ENCODE measurements at regions of chr6 and their contacts with region 1.

Region 1: GRCh38 chr6:39102071-39102820 is 12.7 kb downstream of the SAYSD1 start:
- DNase-seq: peak; percentile 49
- H3K4me3 ChIP-seq: no peak overlapping the region
- H3K27ac ChIP-seq: no peak overlapping the region
- H3K4me1 ChIP-seq: no peaks in the 10 kb centered on the region
- CTCF ChIP-seq: peak; percentile 79

Region 2: GRCh38 chr6:38871741-38872568 is 230.3 kb before region 1 on chr6:
- CTCF ChIA-PET with region 1: no interaction called
- POLR2A ChIA-PET with region 1: no interaction called
- intact Hi-C with region 1: loop called (anchors 5 kb)
- DNase-seq: peak; percentile 44
- H3K4me3 ChIP-seq: no peak overlapping the region
- H3K27ac ChIP-seq: no peak overlapping the region
- H3K4me1 ChIP-seq: no peaks in the 10 kb centered on the region
- CTCF ChIP-seq: peak; percentile 97